ENCODE measurements at regions of chr9 and their contacts with region 1.

Region 1: GRCh38 chr9:100492952-100493351 is 20.0 kb downstream of the TMEFF1 start:
- DNase-seq: no peak
- ATAC-seq: no peak
- H3K4me3 ChIP-seq: no peak overlapping the region
- H3K4me3 Mint-ChIP-seq: no peak overlapping the region
- H3K27ac ChIP-seq: no peak overlapping the region
- H3K27ac Mint-ChIP-seq: no peak overlapping the region
- H3K4me1 ChIP-seq: no peaks in the 10 kb centered on the region
- H3K4me1 Mint-ChIP-seq: no peaks in the 10 kb centered on the region
- H3K27me3 ChIP-seq: peaks cover 0 to 3% of the 10 kb centered on the region in 2 experiments
- H3K27me3 Mint-ChIP-seq: no peaks in the 10 kb centered on the region

Region 2: GRCh38 chr9:100346836-100347235 is 146.1 kb before region 1 on chr9:
- CTCF ChIA-PET with region 1: no interaction called
- POLR2A ChIA-PET with region 1: no interaction called
- DNase-seq: no peak
- ATAC-seq: no peak
- H3K4me3 ChIP-seq: no peak overlapping the region
- H3K4me3 Mint-ChIP-seq: no peak overlapping the region
- H3K27ac ChIP-seq: no peak overlapping the region
- H3K27ac Mint-ChIP-seq: no peak overlapping the region
- H3K4me1 ChIP-seq: peaks cover 9 to 26% of the 10 kb centered on the region in 2 experiments
- H3K4me1 Mint-ChIP-seq: peaks cover 64 to 76% (median 71%) of the 10 kb centered on the region in 3 donors
- H3K27me3 ChIP-seq: no peaks in the 10 kb centered on the region
- H3K27me3 Mint-ChIP-seq: no peaks in the 10 kb centered on the region

Region 3: GRCh38 chr9:100505564-100506159 is 12.7 kb after region 1 on chr9:
- CTCF ChIA-PET with region 1: interaction called in 1 of 2 experiments, 6 read pairs
- POLR2A ChIA-PET with region 1: interaction called in 1 of 2 experiments, 14 read pairs
- DNase-seq: peak in 31 of 35 experiments; percentile 2 to 62 (median 34)
- ATAC-seq: no peak
- H3K4me3 ChIP-seq: no peak overlapping the region
- H3K4me3 Mint-ChIP-seq: no peak overlapping the region
- H3K27ac ChIP-seq: no peak overlapping the region
- H3K27ac Mint-ChIP-seq: no peak overlapping the region
- H3K4me1 ChIP-seq: no peaks in the 10 kb centered on the region
- H3K4me1 Mint-ChIP-seq: no peaks in the 10 kb centered on the region
- H3K27me3 ChIP-seq: no peaks in the 10 kb centered on the region
- H3K27me3 Mint-ChIP-seq: no peaks in the 10 kb centered on the region